ENCODE measurements at regions of chr4 and their contacts with region 1.

Region 1: GRCh38 chr4:75432683-75433082 is 81.5 kb downstream of the RCHY1 start:
- DNase-seq: peak; percentile 44 to 55
- H3K4me3 ChIP-seq: no peak overlapping the region
- H3K4me3 Mint-ChIP-seq: no peak overlapping the region
- H3K27ac Mint-ChIP-seq: no peak overlapping the region
- H3K4me1 ChIP-seq: no peaks in the 10 kb centered on the region
- H3K4me1 Mint-ChIP-seq: no peaks in the 10 kb centered on the region
- H3K27me3 ChIP-seq: no peaks in the 10 kb centered on the region
- H3K27me3 Mint-ChIP-seq: peaks cover 20% of the 10 kb centered on the region
- CTCF ChIP-seq: peak; percentile 67 to 68

Region 2: GRCh38 chr4:75469896-75470295 is 37.2 kb after region 1 on chr4:
- CTCF ChIA-PET with region 1: interaction called, 12 read pairs
- POLR2A ChIA-PET with region 1: no interaction called
- intact Hi-C with region 1: loop called (anchors 1 kb)
- DNase-seq: no peak
- H3K4me3 ChIP-seq: no peak overlapping the region
- H3K4me3 Mint-ChIP-seq: no peak overlapping the region
- H3K27ac Mint-ChIP-seq: no peak overlapping the region
- H3K4me1 ChIP-seq: no peaks in the 10 kb centered on the region
- H3K4me1 Mint-ChIP-seq: no peaks in the 10 kb centered on the region
- H3K27me3 ChIP-seq: no peaks in the 10 kb centered on the region
- H3K27me3 Mint-ChIP-seq: no peaks in the 10 kb centered on the region
- CTCF ChIP-seq: no peak

Region 3: GRCh38 chr4:75490155-75490554 is 57.5 kb after region 1 on chr4:
- CTCF ChIA-PET with region 1: interaction called, 12 read pairs
- POLR2A ChIA-PET with region 1: no interaction called
- intact Hi-C with region 1: loop called (anchors 1 kb)
- DNase-seq: no peak
- H3K4me3 ChIP-seq: no peak overlapping the region
- H3K4me3 Mint-ChIP-seq: no peak overlapping the region
- H3K27ac Mint-ChIP-seq: no peak overlapping the region
- H3K4me1 ChIP-seq: peaks cover 4% of the 10 kb centered on the region
- H3K4me1 Mint-ChIP-seq: no peaks in the 10 kb centered on the region
- H3K27me3 ChIP-seq: no peaks in the 10 kb centered on the region
- H3K27me3 Mint-ChIP-seq: no peaks in the 10 kb centered on the region
- CTCF ChIP-seq: peak; percentile 27 to 39

Region 4: GRCh38 chr4:75566911-75567310 is 134.2 kb after region 1 on chr4:
- CTCF ChIA-PET with region 1: no interaction called
- POLR2A ChIA-PET with region 1: no interaction called
- intact Hi-C with region 1: no loop called
- DNase-seq: no peak
- H3K4me3 ChIP-seq: no peak overlapping the region
- H3K4me3 Mint-ChIP-seq: no peak overlapping the region
- H3K27ac Mint-ChIP-seq: no peak overlapping the region
- H3K4me1 ChIP-seq: peaks cover 7% of the 10 kb centered on the region; the same call in 1 of the 2 replicates
- H3K4me1 Mint-ChIP-seq: peaks cover 2% of the 10 kb centered on the region
- H3K27me3 ChIP-seq: no peaks in the 10 kb centered on the region
- H3K27me3 Mint-ChIP-seq: no peaks in the 10 kb centered on the region
- CTCF ChIP-seq: no peak